Mammary epithelial cell (primary cell): ENCODE measurements at regions of chr7 and their contacts with region 1.

Region 1: DNA sequence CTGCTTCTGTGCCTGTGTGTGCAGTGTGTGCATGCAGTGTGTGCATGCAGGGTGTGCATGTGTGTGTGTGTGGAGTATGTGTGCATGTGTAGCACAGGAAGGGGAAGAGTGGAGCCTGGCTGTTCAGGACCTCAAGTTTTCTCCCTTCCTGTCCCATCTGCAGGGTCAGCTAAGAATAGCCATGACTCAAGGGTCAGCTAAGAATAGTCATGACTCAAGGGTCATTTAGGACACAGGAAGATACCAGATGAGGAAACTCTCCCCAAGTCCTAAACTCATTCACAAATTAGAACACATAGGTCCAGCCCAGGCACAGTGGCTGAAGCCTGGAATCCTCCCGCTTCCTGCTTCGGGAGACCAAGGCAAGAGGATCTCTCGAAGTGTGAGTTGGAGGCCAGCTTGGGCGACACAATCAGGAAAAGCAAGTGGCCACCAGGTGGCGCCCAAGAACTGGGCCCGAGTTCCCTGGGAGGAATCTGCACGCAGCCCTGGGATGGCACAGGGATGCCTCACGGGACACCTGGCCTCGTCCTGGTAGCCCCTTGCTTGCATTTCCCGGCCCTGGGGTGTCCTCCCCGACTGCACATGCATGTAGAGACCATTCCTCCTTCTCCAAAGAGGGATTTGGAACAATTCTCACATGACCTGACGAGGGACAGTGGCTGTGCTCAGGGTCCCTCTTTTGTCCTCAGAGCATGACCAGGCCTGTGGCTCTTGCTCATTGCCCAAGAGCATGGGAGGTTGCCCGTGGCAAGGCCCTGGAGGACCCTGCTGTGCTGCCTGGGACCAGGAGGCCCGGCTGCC is 21.4 kb upstream of the VOPP1 start:
- DNase-seq: peak; percentile 51
- H3K4me3 ChIP-seq: no peak overlapping the region
- H3K27ac ChIP-seq: no peak overlapping the region
- H3K4me1 ChIP-seq: no peaks in the 10 kb centered on the region
- H3K27me3 ChIP-seq: no peaks in the 10 kb centered on the region
- CTCF ChIP-seq: peak; percentile 68 to 95

Region 2: DNA sequence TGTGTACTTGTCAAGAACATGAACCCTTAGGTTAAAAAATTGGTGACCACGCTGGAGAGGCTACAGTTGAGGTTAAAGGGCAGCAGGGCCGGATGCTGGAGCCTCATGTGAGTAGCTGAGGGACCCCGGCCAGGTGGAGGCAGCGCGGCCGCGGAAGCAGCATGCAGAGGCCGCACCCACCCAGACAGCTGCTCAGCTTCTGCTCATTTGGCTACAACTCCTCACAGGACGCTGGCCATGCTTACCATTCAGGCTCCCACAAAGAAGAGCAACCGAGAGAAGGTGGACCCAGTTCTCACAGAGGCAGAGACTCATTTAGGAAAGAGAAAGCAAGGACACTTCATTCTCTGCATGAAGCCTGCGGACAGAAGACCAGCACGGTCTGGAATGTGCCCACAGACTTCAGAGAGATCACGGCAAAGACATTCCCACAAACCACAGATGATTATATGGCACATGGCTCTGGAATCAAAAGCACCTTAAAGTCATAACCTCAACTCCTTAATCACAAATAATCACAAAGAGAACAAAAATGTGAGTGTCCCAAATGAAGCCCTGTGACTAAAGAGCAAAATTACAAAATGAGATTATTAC is 115.8 kb before region 1 on chr7:
- CTCF ChIA-PET with region 1: interaction called, 20 read pairs
- dilution Hi-C with region 1: no loop called
- in situ Hi-C with region 1: no loop called
- intact Hi-C with region 1: no loop called
- DNase-seq: peak; percentile 76
- H3K4me3 ChIP-seq: no peak overlapping the region
- H3K27ac ChIP-seq: no peak overlapping the region
- H3K4me1 ChIP-seq: peaks cover 11% of the 10 kb centered on the region
- H3K27me3 ChIP-seq: no peaks in the 10 kb centered on the region
- CTCF ChIP-seq: no peak

Region 3: DNA sequence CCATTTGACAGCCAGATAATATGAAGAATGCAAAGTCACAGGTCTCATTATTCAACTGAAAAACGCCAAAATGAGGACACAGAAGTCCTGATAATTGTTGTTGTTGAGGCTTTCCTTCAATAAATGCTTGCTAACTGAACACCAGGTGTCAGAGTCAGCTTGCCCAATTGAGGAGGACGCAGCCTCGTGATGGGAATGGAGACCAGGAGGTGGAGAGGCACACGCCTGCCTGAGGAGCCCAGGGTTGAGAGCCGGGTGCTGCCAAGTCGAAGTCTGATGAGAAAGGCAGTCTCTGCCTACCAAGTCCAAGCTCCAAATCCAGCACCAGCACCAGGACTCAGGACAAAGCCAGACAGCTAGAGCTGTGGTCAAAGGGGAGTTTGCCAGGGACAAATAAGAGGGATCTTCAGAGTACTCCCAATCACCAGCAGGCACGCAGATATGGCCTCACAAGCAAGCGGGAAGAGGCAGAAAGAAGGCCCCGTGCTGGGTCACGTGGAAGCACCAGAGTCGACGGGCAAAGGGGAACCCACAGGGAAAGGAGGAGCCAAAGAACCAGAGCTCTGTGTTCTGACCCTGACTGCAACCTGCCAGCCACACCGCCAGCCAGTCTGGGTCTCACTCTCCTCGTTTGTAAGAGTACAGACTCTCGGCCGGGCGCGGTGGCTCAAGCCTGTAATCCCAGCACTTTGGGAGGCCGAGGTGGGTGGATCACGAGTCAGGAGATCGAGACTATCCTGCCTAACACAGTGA is 69.0 kb before region 1 on chr7:
- CTCF ChIA-PET with region 1: no interaction called
- dilution Hi-C with region 1: no loop called
- in situ Hi-C with region 1: no loop called
- intact Hi-C with region 1: loop called (anchors 5 kb)
- DNase-seq: no peak
- H3K4me3 ChIP-seq: no peak overlapping the region
- H3K27ac ChIP-seq: no peak overlapping the region
- H3K4me1 ChIP-seq: peaks cover 12% of the 10 kb centered on the region
- H3K27me3 ChIP-seq: no peaks in the 10 kb centered on the region
- CTCF ChIP-seq: peak in 1 of 2 donors; percentile 27

Region 4: DNA sequence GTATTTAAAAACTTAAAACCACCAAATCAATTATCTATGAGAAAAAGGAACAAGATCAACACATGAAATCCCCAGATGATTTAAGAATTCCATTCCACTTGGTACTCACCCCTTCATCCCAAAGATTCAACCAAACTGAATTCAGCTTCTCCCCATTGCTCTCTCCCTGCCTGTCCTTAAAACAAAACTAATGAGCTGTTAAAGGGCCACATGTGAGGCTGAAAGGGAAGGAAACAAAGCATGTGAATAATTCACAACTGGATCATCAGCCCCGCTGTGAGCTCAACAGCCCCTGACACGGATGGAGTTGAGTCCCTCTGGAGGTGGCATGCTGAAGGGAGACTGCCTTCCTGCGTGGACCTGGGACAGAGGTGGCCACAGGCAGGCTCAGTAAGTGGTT is 54.3 kb before region 1 on chr7:
- CTCF ChIA-PET with region 1: no interaction called
- dilution Hi-C with region 1: no loop called
- in situ Hi-C with region 1: no loop called
- intact Hi-C with region 1: no loop called
- DNase-seq: no peak
- H3K4me3 ChIP-seq: no peak overlapping the region
- H3K27ac ChIP-seq: peak overlapping the region; percentile 60
- H3K4me1 ChIP-seq: peaks cover 33% of the 10 kb centered on the region
- H3K27me3 ChIP-seq: no peaks in the 10 kb centered on the region
- CTCF ChIP-seq: no peak